ENCODE measurements at regions of chr12 and their contacts with region 1.

Region 1: GRCh38 chr12:9634177-9634803 is 26.6 kb upstream of the KLRB1 start:
- DNase-seq: peak in 1 of 2 donors; percentile 56
- H3K4me3 ChIP-seq: no peak overlapping the region
- H3K27ac ChIP-seq: no peak overlapping the region
- H3K4me1 ChIP-seq: no peaks in the 10 kb centered on the region
- H3K27me3 ChIP-seq: no peaks in the 10 kb centered on the region
- CTCF ChIP-seq: peak; percentile 41 to 60 (median 55)
- POLR2A ChIP-seq: no peak

Region 2: DNA sequence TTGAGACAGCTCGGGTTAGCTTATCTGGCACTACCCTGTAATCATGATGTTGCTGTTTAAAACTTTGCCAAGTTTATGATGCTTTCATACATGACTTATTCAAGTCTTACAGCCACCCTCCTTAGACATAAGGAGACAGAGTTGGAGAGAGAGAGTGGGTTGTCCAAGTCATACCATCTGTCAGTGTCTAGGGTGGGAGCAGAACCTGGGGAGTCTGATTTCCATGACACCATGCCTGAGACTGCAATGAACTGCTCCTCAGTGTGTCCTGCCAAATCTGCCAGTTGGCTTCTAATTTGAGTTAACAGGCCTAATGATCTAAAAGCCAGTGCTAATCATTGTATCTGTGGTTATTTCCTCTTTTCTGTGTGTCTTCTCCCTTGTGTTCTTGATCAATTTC is 763.7 kb before region 1 on chr12:
- intact Hi-C with region 1: no loop called
- DNase-seq: no peak
- H3K4me3 ChIP-seq: no peak overlapping the region
- H3K27ac ChIP-seq: no peak overlapping the region
- H3K4me1 ChIP-seq: no peaks in the 10 kb centered on the region
- H3K27me3 ChIP-seq: no peaks in the 10 kb centered on the region
- CTCF ChIP-seq: no peak
- POLR2A ChIP-seq: no peak

Region 3: GRCh38 chr12:9707864-9708808 is 73.8 kb after region 1 on chr12:
- intact Hi-C with region 1: loop called (anchors 10 kb)
- DNase-seq: peak; percentile 28 to 37
- H3K4me3 ChIP-seq: no peak overlapping the region
- H3K27ac ChIP-seq: no peak overlapping the region
- H3K4me1 ChIP-seq: no peaks in the 10 kb centered on the region
- H3K27me3 ChIP-seq: no peaks in the 10 kb centered on the region
- CTCF ChIP-seq: peak; percentile 53 to 66 (median 57)
- POLR2A ChIP-seq: no peak

Region 4: GRCh38 chr12:9813821-9814809 is 179.8 kb after region 1 on chr12:
- intact Hi-C with region 1: no loop called
- DNase-seq: peak; percentile 45 to 60
- H3K4me3 ChIP-seq: no peak overlapping the region
- H3K27ac ChIP-seq: no peak overlapping the region
- H3K4me1 ChIP-seq: no peaks in the 10 kb centered on the region
- H3K27me3 ChIP-seq: no peaks in the 10 kb centered on the region
- CTCF ChIP-seq: peak; percentile 28 to 62 (median 52)
- POLR2A ChIP-seq: no peak

Measured in uterus (tissue), 4 donors.